Lower leg skin (tissue), 4 donors: ENCODE measurements at regions of chr6 and their contacts with region 1.

Region 1: DNA sequence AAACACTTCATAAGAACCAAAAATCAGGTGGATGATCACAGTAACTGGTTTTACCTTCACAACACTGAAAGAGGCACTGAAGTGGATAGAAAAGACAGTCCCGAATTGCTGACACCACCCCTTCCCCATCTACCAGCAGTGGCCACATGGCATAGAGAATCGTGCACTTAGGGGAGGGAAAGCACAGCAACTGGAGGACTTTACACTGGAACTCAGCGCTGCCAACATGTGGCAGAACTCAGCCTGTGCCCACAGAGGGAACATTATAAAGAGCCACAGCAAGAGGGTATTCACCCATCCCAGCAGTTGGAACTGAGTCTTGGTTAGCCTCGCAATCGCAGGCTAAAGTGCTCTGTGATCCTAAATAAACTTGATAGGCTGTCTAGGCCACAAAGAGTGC is 6.5 kb upstream of the KIAA1586 start:
- DNase-seq: no peak
- H3K4me3 ChIP-seq: no peak overlapping the region
- CTCF ChIP-seq: no peak
- POLR2A ChIP-seq: no peak

Region 2: DNA sequence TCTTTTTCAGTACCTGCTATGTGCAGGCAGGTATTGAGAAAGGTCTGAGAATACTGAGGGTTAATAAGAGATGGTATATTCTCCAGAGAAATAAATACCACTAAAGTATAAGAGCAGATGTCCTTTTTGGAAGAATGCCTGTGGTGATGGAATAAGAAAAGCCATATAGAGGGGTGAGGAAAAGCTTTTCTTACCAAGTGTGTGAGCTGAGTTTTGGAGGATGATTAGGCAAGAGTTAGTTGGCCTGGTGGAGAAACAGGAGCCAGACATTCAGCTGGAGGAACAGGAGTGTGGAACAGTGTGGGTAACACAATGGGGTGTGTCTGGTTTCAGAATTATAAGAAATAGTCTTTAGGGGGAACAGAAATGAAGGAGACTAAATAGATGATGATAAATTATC is 69.9 kb after region 1 on chr6:
- intact Hi-C with region 1: loop called (anchors 10 kb)
- DNase-seq: no peak
- H3K4me3 ChIP-seq: no peak overlapping the region
- CTCF ChIP-seq: no peak
- POLR2A ChIP-seq: no peak